ENCODE measurements at regions of chr1 and their contacts with region 1.

Region 1: DNA sequence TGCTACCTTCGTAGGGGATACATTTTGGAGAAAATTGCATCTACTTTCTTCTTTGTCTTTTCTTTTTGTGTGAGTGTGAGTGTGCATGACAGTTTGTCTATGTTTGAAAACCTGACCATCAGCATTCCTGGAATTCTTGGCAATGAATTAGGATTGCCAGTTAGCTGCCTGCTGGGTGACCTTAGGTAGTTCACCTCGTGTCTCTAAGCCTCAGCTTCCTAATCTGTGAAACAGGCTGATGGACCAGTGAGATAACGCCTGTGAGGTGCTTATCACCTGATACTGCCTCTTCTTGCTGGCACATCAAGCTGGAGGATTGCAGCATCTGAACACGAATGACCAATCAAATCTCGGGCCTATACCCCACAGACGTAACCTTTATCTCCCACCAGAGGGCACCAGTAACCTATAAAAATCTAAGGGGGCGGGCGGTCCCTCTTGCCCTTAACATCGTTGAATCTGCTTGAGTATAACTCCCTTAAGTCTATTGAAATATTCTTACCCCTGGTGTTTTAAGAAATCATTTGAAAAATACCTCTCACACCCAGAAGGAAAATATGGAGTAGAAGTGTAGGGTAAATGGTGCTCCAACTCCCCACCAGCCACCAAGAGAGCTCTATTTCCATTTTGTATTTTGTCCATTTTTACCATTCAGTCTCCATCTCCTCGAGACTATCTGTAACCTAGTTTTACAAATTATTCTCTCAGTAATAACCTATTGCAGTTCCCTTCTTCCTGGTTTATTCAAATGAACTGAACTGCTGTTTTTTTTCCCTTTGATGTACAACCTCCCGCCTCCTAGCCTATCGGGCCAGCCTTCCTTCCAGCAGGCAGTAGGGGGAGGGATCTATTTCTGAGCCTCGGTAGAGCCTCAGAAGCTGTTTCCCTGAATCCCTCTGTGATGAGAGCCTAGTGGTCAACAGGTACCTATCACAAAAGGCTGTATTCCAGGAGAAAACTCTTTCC is 49.7 kb downstream of the MDM4 start:
- DNase-seq: peak; percentile 68 to 80 (median 70)
- H3K4me3 ChIP-seq: no peak overlapping the region
- H3K4me3 Mint-ChIP-seq: peak overlapping the region in 4 of 8 donors; percentile 14 to 47 (median 32)
- H3K27ac ChIP-seq: no peak overlapping the region
- H3K27ac Mint-ChIP-seq: peak overlapping the region; percentile 68 to 93 (median 79)
- H3K4me1 ChIP-seq: peaks cover 36% of the 10 kb centered on the region
- H3K4me1 Mint-ChIP-seq: peaks cover 32 to 49% (median 39%) of the 10 kb centered on the region in 4 donors
- H3K27me3 ChIP-seq: no peaks in the 10 kb centered on the region
- H3K27me3 Mint-ChIP-seq: no peaks in the 10 kb centered on the region

Region 2: DNA sequence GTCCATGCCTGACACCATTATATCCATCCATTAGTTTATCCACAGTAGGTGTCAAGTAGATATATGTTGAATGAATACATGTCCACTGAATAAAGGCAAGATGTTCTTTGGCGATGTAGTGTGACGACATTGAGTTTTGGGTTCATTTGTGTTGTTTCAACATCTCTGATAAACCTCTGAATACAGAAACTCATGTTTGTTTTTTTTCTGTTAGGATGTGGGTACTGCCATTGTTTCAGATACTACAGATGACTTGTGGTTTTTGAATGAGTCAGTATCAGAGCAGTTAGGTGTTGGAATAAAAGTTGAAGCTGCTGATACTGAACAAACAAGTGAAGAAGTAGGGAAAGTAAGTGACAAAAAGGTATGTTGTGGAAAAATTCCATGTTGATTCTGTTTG is 21.6 kb before region 1 on chr1:
- CTCF ChIA-PET with region 1: interaction called, 12 read pairs
- POLR2A ChIA-PET with region 1: interaction called, 14 read pairs
- intact Hi-C with region 1: no loop called
- DNase-seq: peak; percentile 51 to 72 (median 62)
- H3K4me3 ChIP-seq: no peak overlapping the region
- H3K4me3 Mint-ChIP-seq: peak overlapping the region; percentile 11 to 80 (median 53)
- H3K27ac ChIP-seq: peak overlapping the region; percentile 56
- H3K27ac Mint-ChIP-seq: peak overlapping the region; percentile 25 to 88 (median 76)
- H3K4me1 ChIP-seq: peaks cover 51% of the 10 kb centered on the region
- H3K4me1 Mint-ChIP-seq: peaks cover 34 to 60% (median 47%) of the 10 kb centered on the region in 4 donors
- H3K27me3 ChIP-seq: no peaks in the 10 kb centered on the region
- H3K27me3 Mint-ChIP-seq: no peaks in the 10 kb centered on the region

Region 3: GRCh38 chr1:204578867-204579664 is 13.2 kb after region 1 on chr1:
- CTCF ChIA-PET with region 1: interaction called, 16 read pairs
- POLR2A ChIA-PET with region 1: interaction called, 5 read pairs
- intact Hi-C with region 1: no loop called
- DNase-seq: peak in 2 of 5 donors; percentile 14 to 19
- H3K4me3 ChIP-seq: peak overlapping the region; percentile 35 to 77
- H3K4me3 Mint-ChIP-seq: peak overlapping the region; percentile 79 to 94 (median 87)
- H3K27ac ChIP-seq: peak overlapping the region; percentile 50
- H3K27ac Mint-ChIP-seq: peak overlapping the region; percentile 86 to 92 (median 92)
- H3K4me1 ChIP-seq: peaks cover 29% of the 10 kb centered on the region
- H3K4me1 Mint-ChIP-seq: peaks cover 17 to 37% (median 22%) of the 10 kb centered on the region in 4 donors
- H3K27me3 ChIP-seq: no peaks in the 10 kb centered on the region
- H3K27me3 Mint-ChIP-seq: no peaks in the 10 kb centered on the region

Region 4: DNA sequence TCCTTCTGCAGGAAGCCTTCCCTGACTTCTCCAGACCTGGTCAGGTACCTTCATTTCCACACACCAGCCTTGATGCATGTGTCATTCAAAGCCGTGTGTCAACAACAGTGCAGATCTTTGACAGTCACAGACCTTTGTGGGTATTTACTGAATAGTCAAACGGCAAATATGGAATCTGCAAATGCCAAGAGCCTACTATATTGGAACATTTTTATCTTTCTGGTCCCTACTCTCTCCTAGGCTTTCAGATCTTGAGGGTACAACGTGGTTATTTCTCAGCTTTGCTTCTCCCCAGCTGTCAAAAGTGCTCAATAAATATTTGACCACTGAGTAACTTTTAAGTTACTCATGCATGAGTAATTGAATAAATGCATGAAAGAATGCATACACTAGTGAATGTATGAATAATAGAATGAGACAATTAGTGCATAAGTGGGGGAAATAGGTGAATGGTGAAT is 25.7 kb after region 1 on chr1:
- CTCF ChIA-PET with region 1: no interaction called
- POLR2A ChIA-PET with region 1: no interaction called
- intact Hi-C with region 1: no loop called
- DNase-seq: no peak
- H3K4me3 ChIP-seq: no peak overlapping the region
- H3K4me3 Mint-ChIP-seq: no peak overlapping the region
- H3K27ac ChIP-seq: no peak overlapping the region
- H3K27ac Mint-ChIP-seq: peak overlapping the region in 1 of 7 donors; percentile 13
- H3K4me1 ChIP-seq: no peaks in the 10 kb centered on the region
- H3K4me1 Mint-ChIP-seq: peaks cover 0 to 1% (median under 1%) of the 10 kb centered on the region in 4 donors
- H3K27me3 ChIP-seq: no peaks in the 10 kb centered on the region
- H3K27me3 Mint-ChIP-seq: no peaks in the 10 kb centered on the region

Region 5: DNA sequence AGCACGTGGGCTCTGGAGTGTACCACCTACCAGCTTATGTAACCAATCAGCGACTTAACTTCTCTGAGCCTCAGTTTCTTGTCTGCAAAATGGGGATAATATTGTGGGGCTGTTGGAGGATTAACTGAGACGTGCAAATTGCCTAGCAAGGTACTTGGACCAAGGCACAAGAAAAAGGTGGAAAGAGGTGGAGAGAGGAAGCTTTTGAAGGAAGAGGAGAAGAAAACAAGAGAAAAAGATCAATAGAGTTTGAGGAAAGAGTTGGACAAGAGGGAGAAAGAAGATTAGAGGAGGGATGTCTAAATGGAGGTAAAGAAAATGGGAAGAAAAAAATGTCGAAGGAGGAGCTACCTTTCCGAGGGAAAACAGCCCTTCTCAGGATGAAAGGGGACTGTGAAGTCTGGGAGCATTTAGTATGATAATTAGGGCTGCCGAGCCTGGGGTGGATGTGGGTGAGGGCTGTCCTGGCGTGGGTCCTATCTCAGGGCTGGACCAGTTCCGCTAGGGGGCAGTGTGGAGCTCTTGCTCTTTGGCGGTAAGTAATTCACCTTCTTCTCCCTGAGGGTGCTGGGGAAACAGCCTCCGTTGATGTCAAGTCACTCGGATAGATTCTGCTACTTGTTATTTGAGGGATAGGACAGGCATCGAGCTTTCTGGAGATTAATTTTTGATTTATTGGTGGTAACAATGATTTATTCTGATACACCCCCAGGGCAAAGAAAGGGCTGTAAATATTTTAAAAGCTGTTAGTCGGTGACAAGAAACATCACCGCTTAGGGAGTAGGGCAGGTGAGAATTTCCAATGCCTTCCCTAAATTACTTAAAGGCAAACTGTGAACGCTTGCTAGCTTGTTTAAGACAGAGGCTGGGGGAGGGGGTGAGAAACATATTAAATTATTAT is 225.8 kb after region 1 on chr1:
- CTCF ChIA-PET with region 1: interaction called, 12 read pairs
- POLR2A ChIA-PET with region 1: no interaction called
- intact Hi-C with region 1: no loop called
- DNase-seq: peak; percentile 67 to 73 (median 69)
- H3K4me3 ChIP-seq: no peak overlapping the region
- H3K4me3 Mint-ChIP-seq: no peak overlapping the region
- H3K27ac ChIP-seq: no peak overlapping the region
- H3K27ac Mint-ChIP-seq: no peak overlapping the region
- H3K4me1 ChIP-seq: no peaks in the 10 kb centered on the region
- H3K4me1 Mint-ChIP-seq: peaks cover 0 to 5% (median 0%) of the 10 kb centered on the region in 4 donors
- H3K27me3 ChIP-seq: peaks cover 4% of the 10 kb centered on the region
- H3K27me3 Mint-ChIP-seq: peaks cover 30 to 32% of the 10 kb centered on the region in 2 donors

Region 6: DNA sequence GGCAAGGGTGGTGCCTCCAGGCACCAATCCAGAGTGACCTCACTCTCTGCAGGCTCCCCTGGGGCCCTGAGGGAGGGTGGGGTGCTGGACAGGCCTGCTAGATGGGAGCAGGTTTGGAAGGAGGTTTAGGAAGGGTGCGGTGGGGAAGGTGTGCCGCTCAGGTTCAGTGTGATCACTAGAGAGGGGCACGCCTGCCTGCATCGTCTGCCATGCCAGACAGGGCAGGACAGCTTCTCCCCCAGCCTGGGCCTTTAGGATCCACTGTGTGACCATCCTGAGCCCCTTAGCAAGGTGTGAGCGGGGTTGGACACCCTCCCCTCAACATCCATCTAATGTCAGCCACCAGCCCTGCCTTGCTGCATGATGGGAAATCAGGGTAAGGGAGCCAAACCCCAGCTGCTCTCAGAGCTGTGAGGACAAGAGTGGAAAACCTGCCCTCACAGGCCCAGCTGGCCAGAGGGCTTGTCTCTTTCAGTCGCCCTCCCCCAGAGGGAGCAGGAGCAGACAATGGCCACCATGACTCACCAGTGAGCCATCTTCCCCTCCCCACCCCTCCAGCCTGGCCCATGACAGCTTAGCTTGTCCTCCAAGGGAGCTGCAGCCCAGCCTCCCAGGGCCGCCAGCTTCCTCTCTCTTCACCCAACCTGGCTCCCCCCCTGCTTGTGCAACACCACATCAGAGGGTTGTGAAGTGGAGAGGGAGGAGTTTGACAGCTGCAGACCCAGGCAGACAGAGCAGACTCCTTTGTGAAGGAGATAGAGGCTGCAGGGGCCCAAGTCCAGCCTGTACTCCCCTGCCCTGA is 718.6 kb after region 1 on chr1:
- CTCF ChIA-PET with region 1: no interaction called
- POLR2A ChIA-PET with region 1: no interaction called
- intact Hi-C with region 1: no loop called
- DNase-seq: peak; percentile 88 to 97 (median 90)
- H3K4me3 ChIP-seq: peak overlapping the region; percentile 56 to 71
- H3K4me3 Mint-ChIP-seq: peak overlapping the region; percentile 74 to 89 (median 84)
- H3K27ac ChIP-seq: peak overlapping the region; percentile 62
- H3K27ac Mint-ChIP-seq: peak overlapping the region; percentile 86 to 98 (median 95)
- H3K4me1 ChIP-seq: peaks cover 87% of the 10 kb centered on the region
- H3K4me1 Mint-ChIP-seq: peaks cover 64 to 89% (median 78%) of the 10 kb centered on the region in 4 donors
- H3K27me3 ChIP-seq: no peaks in the 10 kb centered on the region
- H3K27me3 Mint-ChIP-seq: no peaks in the 10 kb centered on the region